ENCODE measurements at regions of chr12 and their contacts with region 1.

Region 1: GRCh38 chr12:56266693-56267442 is at the start of gene COQ10A:
- DNase-seq: peak; percentile 41
- H3K4me3 ChIP-seq: peak within 1 kb of the TSS; percentile 78
- H3K27me3 ChIP-seq: no peaks in the 10 kb centered on the region
- CTCF ChIP-seq: peak; percentile 82
- polyA plus RNA-seq, gene COQ10A: 13.7 and 14.1 TPM in 2 replicates

Region 2: GRCh38 chr12:56286044-56286830 is 19.4 kb after region 1 on chr12:
- CTCF ChIA-PET with region 1: interaction called, 10 read pairs
- POLR2A ChIA-PET with region 1: no interaction called
- DNase-seq: no peak
- H3K4me3 ChIP-seq: no peak overlapping the region
- H3K27me3 ChIP-seq: no peaks in the 10 kb centered on the region
- CTCF ChIP-seq: no peak

Region 3: GRCh38 chr12:56490360-56490759 is 223.5 kb after region 1 on chr12:
- CTCF ChIA-PET with region 1: no interaction called
- POLR2A ChIA-PET with region 1: no interaction called
- DNase-seq: no peak
- H3K4me3 ChIP-seq: no peak overlapping the region
- H3K27me3 ChIP-seq: peaks cover 6% of the 10 kb centered on the region
- CTCF ChIP-seq: no peak

Measured in BJ (cell line).